Posterior vena cava (tissue), 2 donors: ENCODE measurements at regions of chr14 and their contacts with region 1.

Region 1: DNA sequence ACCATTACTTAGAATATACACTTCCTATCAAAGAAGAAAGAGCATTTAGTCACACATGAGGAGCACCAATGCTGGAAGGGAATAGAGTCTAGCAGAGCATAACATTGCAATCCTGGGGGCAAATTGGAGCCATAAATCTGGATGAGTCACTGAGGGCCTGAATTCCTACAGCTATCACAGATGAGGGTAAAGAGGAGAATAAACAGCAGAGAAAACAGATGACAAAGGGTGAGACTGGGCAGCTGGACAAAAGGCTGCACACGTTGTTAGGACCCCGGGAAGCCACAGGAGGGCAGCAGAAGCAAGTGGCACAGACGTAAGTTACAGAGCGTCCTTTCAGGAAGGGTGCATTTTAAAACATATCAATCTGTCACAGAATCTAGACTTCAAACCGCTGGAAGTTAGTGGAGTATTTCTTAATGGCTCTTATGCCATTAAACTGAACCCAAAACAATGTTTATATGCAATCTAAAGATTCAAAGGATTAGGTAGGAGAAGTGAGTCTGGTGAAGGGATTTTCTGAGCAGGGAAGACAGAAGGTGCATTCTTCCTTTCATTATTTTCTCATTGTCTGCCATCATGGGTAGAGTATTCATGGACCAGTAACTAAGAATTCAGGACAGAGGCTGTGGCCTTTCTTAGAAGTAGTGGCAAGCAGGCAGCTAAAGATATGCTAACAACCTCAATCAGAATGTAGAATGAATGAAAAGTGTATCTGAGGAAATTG is 159.8 kb upstream of the DAAM1 start:
- DNase-seq: peak; percentile 80

Region 2: GRCh38 chr14:58637391-58638230 is 391.0 kb before region 1 on chr14 and contains the start of gene DACT1:
- intact Hi-C with region 1: loop called in 1 of 2 experiments (anchors 10 kb)
- DNase-seq: peak; percentile 90
- total RNA-seq, gene DACT1: 13.7 to 18.8 TPM